IMR-90 (cell line): ENCODE measurements at regions of chr11 and their contacts with region 1.

Region 1: DNA sequence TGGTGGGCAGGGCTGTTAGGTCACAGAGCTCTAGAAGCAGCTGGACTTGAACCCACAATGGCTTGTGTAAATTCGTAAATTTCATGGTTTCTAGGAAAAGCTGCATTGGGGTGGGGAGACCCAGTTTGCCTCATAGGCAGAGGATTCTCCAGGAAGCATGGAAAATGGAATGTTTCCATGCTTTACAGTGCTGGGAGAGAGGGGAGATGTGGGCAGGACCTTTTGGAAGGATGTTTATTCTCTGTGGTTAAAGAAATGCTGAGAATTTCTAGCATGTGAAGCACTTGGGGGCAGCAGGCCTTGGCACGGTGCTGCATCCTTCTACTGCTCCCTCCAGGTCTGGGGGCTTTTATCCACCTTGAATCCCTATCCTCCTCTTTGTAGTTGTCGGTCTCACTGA is 46.3 kb downstream of the TRAF6 start:
- DNase-seq: peak; percentile 59
- ATAC-seq: peak; percentile 89
- H3K4me3 ChIP-seq: no peak overlapping the region
- H3K27ac ChIP-seq: peak overlapping the region; percentile 9; the same call in 1 of the 2 replicates
- H3K4me1 ChIP-seq: peaks cover 14% of the 10 kb centered on the region
- H3K27me3 ChIP-seq: no peaks in the 10 kb centered on the region
- CTCF ChIP-seq: no peak
- POLR2A ChIP-seq: no peak
- RAD21 ChIP-seq: no peak

Region 2: DNA sequence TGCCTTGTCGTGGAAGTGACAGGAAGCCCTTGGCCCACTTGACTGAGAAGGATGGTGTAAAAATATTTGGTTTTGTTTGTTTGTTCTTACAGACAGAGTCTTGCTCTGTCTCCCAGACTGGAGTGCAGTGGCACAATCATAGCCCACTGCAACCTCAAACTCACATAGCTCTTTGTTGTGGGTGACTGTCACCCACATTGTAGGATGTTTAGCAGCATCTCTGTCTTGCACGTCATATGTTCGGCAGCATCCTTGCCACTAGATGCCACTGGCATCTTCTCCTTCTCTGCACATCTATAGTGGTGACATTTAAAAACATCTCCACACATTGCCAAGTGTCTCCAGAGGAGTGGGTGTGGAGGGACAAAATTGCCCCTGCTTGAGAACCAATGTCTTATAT is 110.9 kb before region 1 on chr11:
- CTCF ChIA-PET with region 1: interaction called, 10 read pairs
- POLR2A ChIA-PET with region 1: no interaction called
- dilution Hi-C with region 1: no loop called
- in situ Hi-C with region 1: no loop called
- intact Hi-C with region 1: no loop called
- DNase-seq: no peak
- ATAC-seq: no peak
- H3K4me3 ChIP-seq: no peak overlapping the region
- H3K27ac ChIP-seq: no peak overlapping the region
- H3K4me1 ChIP-seq: peaks cover 5% of the 10 kb centered on the region; the same call in 1 of the 2 replicates
- H3K27me3 ChIP-seq: peaks cover 5% of the 10 kb centered on the region
- CTCF ChIP-seq: no peak
- POLR2A ChIP-seq: no peak
- RAD21 ChIP-seq: no peak

Region 3: DNA sequence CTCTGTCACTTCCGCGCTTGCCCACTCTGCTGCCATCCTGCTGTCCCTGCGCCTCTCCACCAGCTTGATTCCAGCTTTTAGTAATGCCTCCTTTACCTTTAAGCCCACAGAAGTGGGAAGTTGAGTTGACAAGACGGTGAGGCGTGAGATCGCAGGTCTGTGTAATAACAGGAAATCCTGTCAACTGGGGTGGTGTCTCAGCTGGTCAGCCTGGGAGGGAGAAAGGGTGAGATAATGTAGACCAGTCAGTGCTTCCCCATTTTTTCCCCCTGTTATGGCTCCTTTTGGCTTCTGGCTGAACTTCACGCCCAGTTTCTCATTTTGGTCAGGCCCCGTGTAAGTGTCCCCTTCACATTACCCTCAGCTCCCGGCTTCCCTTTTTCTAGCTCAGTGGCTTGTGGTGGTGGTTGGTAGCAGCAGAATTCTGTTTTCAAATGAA is 52.6 kb before region 1 on chr11:
- CTCF ChIA-PET with region 1: no interaction called
- POLR2A ChIA-PET with region 1: no interaction called
- dilution Hi-C with region 1: no loop called
- in situ Hi-C with region 1: no loop called
- intact Hi-C with region 1: no loop called
- DNase-seq: no peak
- ATAC-seq: no peak
- H3K4me3 ChIP-seq: no peak overlapping the region
- H3K27ac ChIP-seq: no peak overlapping the region
- H3K4me1 ChIP-seq: peaks cover 23% of the 10 kb centered on the region
- H3K27me3 ChIP-seq: no peaks in the 10 kb centered on the region
- CTCF ChIP-seq: no peak
- POLR2A ChIP-seq: no peak
- RAD21 ChIP-seq: no peak

Region 4: GRCh38 chr11:36431429-36432092 is 32.2 kb before region 1 on chr11:
- CTCF ChIA-PET with region 1: no interaction called
- POLR2A ChIA-PET with region 1: no interaction called
- dilution Hi-C with region 1: no loop called
- in situ Hi-C with region 1: no loop called
- intact Hi-C with region 1: no loop called
- DNase-seq: peak; percentile 98
- ATAC-seq: peak; percentile 100
- H3K4me3 ChIP-seq: peak overlapping the region; percentile 14; the same call in 1 of the 2 replicates
- H3K27ac ChIP-seq: peak overlapping the region; percentile 55
- H3K4me1 ChIP-seq: peaks cover 17% of the 10 kb centered on the region
- H3K27me3 ChIP-seq: no peaks in the 10 kb centered on the region
- CTCF ChIP-seq: peak; percentile 32; the same call in 1 of the 2 replicates
- POLR2A ChIP-seq: no peak
- RAD21 ChIP-seq: peak; percentile 34

Region 5: DNA sequence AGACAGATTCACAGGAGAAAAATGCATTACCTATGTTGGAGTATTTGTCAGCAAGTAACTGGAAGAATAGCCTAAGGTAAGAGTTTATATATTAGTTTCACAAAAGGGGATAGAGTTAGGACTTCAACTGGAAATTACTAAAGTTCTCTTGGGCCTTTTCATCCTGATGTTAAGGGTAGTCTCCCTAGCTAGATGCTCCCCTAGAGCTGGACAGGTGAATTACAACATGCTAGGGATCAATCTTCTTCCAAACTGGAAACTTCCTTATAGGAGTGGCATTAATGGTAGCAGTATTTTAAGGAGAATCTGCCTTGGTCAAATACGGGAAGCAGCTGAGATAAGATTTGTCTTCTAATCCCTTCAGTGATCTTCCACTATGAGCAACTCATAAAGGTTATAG is 767.1 kb after region 1 on chr11:
- CTCF ChIA-PET with region 1: no interaction called
- POLR2A ChIA-PET with region 1: no interaction called
- dilution Hi-C with region 1: no loop called
- in situ Hi-C with region 1: no loop called
- intact Hi-C with region 1: no loop called
- DNase-seq: no peak
- ATAC-seq: no peak
- H3K4me3 ChIP-seq: no peak overlapping the region
- H3K27ac ChIP-seq: no peak overlapping the region
- H3K4me1 ChIP-seq: no peaks in the 10 kb centered on the region
- H3K27me3 ChIP-seq: no peaks in the 10 kb centered on the region
- CTCF ChIP-seq: no peak
- POLR2A ChIP-seq: no peak
- RAD21 ChIP-seq: no peak